Gastrocnemius medialis (tissue), 4 donors: ENCODE measurements at regions of chr9 and their contacts with region 1.

Region 1: DNA sequence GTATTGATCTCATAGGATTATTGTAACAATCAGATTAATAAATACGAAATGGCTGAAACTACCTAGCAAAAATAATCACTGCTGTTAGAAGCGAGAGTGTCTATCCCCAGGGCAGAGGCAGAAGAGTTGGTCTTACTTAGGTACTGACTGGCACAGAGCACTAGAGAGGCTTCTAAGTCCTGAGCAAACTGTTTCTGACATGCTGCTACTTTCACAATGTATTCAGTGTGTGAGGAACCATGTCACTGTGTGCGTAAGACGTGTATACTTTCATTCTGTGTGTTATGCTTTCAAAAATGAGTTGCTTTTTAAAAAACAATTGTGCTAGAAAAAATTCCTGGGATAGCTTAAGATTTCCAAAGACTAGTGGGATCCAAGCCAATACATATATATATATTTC is 5.5 kb upstream of the KLHL9 start:
- DNase-seq: no peak
- ATAC-seq: no peak
- H3K4me3 ChIP-seq: no peak overlapping the region
- H3K27ac ChIP-seq: no peak overlapping the region
- H3K4me1 ChIP-seq: no peaks in the 10 kb centered on the region
- H3K27me3 ChIP-seq: no peaks in the 10 kb centered on the region
- CTCF ChIP-seq: no peak
- POLR2A ChIP-seq: no peak

Region 2: DNA sequence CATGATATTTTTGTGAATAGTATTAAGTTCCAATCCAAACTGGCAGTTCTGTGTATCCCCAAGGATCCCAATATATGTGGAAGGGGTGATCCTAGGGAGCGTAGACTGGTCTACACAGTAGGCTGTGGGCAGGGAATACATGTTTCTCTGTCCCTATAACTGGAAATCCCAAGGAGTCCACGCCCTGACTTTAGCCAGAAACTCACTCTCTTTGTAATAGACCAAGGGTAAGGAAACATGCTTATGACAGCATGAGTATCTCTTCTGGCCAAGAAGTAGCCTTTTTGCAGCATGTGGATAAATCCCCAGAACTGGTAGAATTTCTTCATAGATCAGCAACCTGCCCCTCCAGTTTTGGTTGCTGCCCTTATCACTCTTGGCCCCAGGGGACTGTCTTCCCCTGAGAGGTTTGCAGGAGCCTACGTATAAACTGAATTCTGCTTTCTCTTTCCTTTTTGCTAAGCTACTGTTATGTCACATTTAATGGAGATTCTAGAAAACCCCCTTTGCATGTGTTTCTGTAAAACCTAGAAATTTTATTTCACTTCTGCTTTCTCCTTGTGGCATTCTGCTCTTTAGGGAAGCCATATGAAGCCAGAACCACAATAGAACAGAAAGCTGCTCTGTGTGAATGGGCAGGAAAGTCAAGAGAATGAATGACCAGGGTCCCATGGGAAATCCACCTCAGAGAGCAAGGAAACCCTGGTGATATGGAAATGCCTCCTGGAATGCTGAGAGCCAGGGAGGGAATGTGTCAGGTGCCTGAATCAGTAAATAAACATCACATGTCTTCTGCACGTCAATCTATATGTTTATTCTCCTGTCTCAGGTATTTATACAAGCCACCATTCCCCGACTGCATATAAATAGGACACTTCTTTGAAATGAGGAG is 41.0 kb after region 1 on chr9:
- in situ Hi-C with region 1: no loop called
- intact Hi-C with region 1: loop called (anchors 1 kb)
- DNase-seq: no peak
- ATAC-seq: no peak
- H3K4me3 ChIP-seq: no peak overlapping the region
- H3K27ac ChIP-seq: no peak overlapping the region
- H3K4me1 ChIP-seq: no peaks in the 10 kb centered on the region
- H3K27me3 ChIP-seq: peaks cover 0 to 11% (median 5%) of the 10 kb centered on the region in 3 donors
- CTCF ChIP-seq: no peak
- POLR2A ChIP-seq: no peak